Panc1 (cell line): ENCODE measurements at regions of chr12 and their contacts with region 1.

Region 1: DNA sequence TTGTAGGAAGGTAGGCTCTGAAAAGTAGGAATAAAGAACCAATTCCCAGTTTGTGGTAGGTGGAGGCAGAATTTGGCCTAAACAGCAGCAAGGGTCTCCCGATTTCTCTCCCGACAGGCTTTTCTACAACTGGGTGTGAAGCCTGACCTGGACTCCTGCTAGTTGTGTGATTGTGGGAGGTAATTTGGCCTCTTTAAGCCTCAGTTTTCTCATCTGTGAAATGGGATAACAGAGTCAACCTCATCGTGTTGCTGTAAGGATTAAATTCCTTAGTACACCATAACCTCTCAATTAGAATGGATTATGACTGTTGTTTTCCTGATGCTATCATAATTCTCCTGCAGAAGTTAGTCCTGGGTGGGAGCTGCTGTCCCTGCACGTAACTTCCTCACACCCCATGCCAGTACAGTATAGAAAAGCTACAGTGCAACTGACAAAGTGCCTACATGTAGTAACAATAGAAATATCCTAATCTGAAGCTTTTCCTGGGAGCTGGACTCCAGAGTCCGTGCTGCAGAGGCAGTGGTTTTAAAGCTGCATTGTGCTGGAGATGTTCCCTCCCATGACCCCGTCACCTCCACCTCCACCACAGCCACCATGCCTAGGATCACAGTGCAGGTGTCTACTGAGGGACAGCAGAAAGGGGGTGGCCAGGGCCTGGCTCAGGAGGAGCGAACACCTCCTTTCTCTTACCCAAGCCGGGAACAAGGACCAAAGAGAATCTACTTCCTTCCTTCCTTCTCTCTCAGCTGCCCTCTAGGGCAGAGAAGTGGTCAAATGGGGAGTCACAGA is 76.5 kb downstream of the FBXL14 start:
- DNase-seq: no peak
- ATAC-seq: no peak
- H3K4me3 ChIP-seq: no peak overlapping the region
- H3K27ac ChIP-seq: peak overlapping the region; percentile 34; the same call in 1 of the 2 replicates
- H3K4me1 ChIP-seq: peaks cover 16% of the 10 kb centered on the region
- H3K27me3 ChIP-seq: no peaks in the 10 kb centered on the region
- CTCF ChIP-seq: no peak

Region 2: GRCh38 chr12:751192-751998 is 766.5 kb before region 1 on chr12:
- CTCF ChIA-PET with region 1: no interaction called
- POLR2A ChIA-PET with region 1: no interaction called
- in situ Hi-C with region 1: no loop called
- intact Hi-C with region 1: no loop called
- DNase-seq: peak; percentile 86
- ATAC-seq: peak; percentile 76
- H3K4me3 ChIP-seq: peak overlapping the region; percentile 39 to 71
- H3K27ac ChIP-seq: peak overlapping the region; percentile 94
- H3K4me1 ChIP-seq: peaks cover 12% of the 10 kb centered on the region
- H3K27me3 ChIP-seq: no peaks in the 10 kb centered on the region
- CTCF ChIP-seq: peak; percentile 80

Region 3: DNA sequence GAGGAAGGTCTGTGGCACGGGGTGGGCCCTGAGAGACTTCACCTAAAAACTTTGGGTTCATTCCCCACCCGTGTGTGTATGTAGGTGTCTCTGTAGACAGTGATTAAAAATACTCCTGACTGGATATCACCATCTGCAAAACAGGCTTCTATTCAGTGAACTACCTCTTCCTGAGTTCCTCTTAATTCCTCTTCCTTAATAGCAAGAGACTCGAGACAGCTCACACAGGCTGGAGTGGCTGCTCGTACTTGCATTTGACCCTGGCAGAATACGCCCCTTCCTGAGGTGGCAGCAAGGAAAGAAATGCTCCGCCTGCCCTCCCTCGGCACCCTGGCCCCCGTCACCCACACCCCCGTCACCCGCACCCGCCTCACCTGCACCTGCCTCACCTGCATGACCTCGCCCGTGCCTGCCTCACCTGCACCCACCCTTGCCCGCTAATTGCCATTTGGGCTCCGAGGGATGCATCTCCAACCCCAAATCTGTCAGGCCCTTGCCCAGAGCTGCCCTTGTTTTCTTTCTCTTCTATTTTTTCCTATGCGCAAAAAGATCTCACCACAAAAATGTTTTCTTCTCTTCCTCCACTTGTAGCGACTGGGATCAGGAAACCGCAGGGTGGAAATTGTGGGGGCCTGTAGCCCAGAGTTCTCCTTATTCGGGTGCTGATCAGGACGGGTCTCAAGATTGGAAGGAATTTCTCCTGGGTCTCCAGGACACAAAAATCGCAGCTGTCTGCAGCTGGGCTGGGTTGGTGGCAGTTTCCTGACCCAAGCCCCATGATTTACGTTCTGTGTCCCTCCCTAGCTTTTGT is 13.4 kb before region 1 on chr12:
- CTCF ChIA-PET with region 1: interaction called, 11 read pairs
- POLR2A ChIA-PET with region 1: no interaction called
- in situ Hi-C with region 1: no loop called
- intact Hi-C with region 1: no loop called
- DNase-seq: no peak
- ATAC-seq: no peak
- H3K4me3 ChIP-seq: no peak overlapping the region
- H3K27ac ChIP-seq: no peak overlapping the region
- H3K4me1 ChIP-seq: peaks cover 6% of the 10 kb centered on the region; the same call in 1 of the 2 replicates
- H3K27me3 ChIP-seq: no peaks in the 10 kb centered on the region
- CTCF ChIP-seq: no peak

Region 4: GRCh38 chr12:1553987-1554982 is 36.4 kb after region 1 on chr12:
- CTCF ChIA-PET with region 1: no interaction called
- POLR2A ChIA-PET with region 1: no interaction called
- in situ Hi-C with region 1: no loop called
- intact Hi-C with region 1: no loop called
- DNase-seq: no peak
- ATAC-seq: peak; percentile 26; the same call in 1 of the 2 replicates
- H3K4me3 ChIP-seq: no peak overlapping the region
- H3K27ac ChIP-seq: no peak overlapping the region
- H3K4me1 ChIP-seq: peaks cover 11% of the 10 kb centered on the region
- H3K27me3 ChIP-seq: no peaks in the 10 kb centered on the region
- CTCF ChIP-seq: no peak